ENCODE measurements at regions of chr11 and their contacts with region 1.

Region 1: DNA sequence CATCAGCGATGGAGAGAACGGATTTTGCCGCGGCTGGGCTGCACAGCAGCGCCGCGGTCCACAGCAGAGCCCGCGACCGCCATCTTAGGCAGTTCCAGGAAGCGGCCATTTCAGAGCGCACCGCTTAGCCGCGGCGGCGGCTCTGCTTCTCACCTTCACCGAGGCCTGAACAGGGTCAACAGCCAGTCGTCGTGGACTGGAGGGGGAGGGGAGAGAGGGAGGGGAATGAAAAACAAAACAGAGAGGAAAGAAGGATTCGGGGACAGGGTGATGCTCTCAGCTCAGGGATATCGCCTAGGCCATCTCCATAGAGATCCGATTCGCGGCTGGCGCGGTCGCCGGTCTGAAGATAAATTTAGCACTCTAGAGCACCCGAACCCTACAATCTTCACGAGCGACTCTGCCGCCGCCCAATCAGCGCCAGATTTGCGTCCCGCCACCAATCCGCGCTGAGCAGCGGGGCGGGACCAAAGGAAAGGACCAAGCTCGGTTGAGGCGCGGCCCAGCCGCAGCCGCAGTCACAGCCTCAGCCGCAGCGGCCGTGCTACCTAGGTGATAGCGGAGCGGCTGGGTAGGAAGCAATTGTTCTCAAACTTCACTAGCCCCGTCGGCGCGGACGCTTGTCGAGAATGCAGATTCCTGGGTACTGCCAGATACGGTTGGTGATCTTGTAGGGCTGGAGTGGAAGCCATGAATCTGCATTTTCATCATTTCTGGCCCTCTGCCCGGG is at the start of gene ZBED5:
- H3K4me3 ChIP-seq: peak within 1 kb of the TSS; percentile 90
- H3K27ac ChIP-seq: peak within 1 kb of the TSS; percentile 77
- H3K4me1 ChIP-seq: no peaks in the 10 kb centered on the region
- CTCF ChIP-seq: peak; percentile 70

Region 2: GRCh38 chr11:10899121-10899830 is 41.4 kb after region 1 on chr11:
- CTCF ChIA-PET with region 1: no interaction called
- POLR2A ChIA-PET with region 1: interaction called, 23 read pairs
- H3K4me3 ChIP-seq: no peak overlapping the region
- H3K27ac ChIP-seq: peak overlapping the region; percentile 78
- H3K4me1 ChIP-seq: 0 out of 2 replicates have a peak, but pooled peaks cover 5% of the 10 kb centered on the region
- CTCF ChIP-seq: no peak

Region 3: GRCh38 chr11:10925144-10925926 is 67.5 kb after region 1 on chr11:
- CTCF ChIA-PET with region 1: interaction called, 3 read pairs
- POLR2A ChIA-PET with region 1: interaction called, 16 read pairs
- H3K4me3 ChIP-seq: no peak overlapping the region
- H3K27ac ChIP-seq: no peak overlapping the region
- H3K4me1 ChIP-seq: no peaks in the 10 kb centered on the region
- CTCF ChIP-seq: no peak

Region 4: DNA sequence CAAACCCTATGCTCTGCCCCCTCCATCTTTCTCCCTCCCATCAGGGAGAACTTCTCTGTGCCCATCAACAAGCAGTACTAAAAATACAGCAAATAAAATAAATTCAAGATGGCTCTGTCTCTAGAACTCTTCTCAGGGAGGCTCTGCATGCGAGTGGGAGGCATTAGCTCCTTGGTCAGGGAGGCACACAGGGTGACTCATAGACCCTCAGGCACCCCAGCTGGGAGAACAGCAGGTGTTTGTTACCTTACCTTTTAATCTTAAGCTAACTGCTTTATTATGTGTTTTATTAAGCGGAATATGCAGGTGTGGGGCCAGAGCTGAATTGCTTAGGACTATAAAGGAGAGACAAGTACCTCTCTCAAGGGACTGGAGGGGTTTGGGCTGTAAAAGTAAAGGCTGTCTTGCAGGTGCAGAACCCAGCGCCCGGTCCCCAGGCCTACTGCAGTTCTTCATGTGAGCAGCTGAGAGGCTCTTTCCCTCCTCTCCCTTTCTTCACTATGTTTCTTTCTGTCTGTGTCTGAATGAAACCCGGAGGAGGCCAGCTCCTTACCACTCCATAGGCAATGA is 474.4 kb after region 1 on chr11:
- CTCF ChIA-PET with region 1: no interaction called
- POLR2A ChIA-PET with region 1: no interaction called
- H3K4me3 ChIP-seq: no peak overlapping the region
- H3K27ac ChIP-seq: no peak overlapping the region
- H3K4me1 ChIP-seq: no peaks in the 10 kb centered on the region
- CTCF ChIP-seq: no peak

Region 5: DNA sequence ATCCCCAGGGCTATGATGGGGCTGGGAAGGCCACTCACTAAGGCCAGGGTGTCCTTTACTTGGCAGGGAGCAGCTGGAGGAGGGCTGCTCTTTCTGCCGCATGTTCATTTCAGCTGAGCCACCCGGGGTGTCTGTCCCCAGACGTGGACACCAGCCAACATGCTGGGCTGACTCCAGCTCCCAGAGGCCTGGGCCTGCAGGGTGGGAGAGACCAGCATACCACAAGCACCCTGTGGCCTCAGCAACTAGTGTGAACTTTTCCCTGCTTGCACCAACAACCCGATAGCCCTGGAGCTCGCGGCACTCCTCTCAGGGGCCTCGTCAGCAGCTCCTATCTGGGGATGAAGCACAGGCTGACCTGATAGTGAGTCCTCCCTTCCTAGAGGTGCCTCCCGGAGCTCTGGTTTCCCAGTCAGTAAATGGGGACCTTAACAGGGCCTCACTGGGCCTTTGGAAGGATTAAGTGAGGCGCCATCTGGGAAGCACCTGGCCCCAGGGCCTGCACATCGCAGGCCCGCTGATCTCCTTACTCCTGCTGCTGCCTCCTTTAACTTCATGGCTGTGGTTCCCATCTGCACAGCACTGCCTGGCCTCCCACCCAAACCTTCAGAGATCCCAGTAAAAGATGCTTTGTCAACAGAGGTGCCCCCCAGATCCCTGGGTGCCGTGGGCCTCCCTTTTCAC is 680.5 kb after region 1 on chr11:
- CTCF ChIA-PET with region 1: no interaction called
- POLR2A ChIA-PET with region 1: no interaction called
- H3K4me3 ChIP-seq: no peak overlapping the region
- H3K27ac ChIP-seq: no peak overlapping the region
- H3K4me1 ChIP-seq: 0 out of 2 replicates have a peak, but pooled peaks cover 5% of the 10 kb centered on the region
- CTCF ChIP-seq: no peak

Measured in HEK293 (cell line).